CD4-positive, alpha-beta memory T cell (primary cell): ENCODE measurements at regions of chr14 and their contacts with region 1.

Region 1: GRCh38 chr14:20613094-20614037 is 22.2 kb upstream of the RNASE12 start:
- DNase-seq: peak; percentile 88 to 94 (median 93)
- H3K4me3 ChIP-seq: peak overlapping the region; percentile 39 to 66
- H3K4me3 Mint-ChIP-seq: no peak overlapping the region
- H3K27ac ChIP-seq: peak overlapping the region; percentile 13
- H3K27ac Mint-ChIP-seq: no peak overlapping the region
- H3K4me1 ChIP-seq: peaks cover 44% of the 10 kb centered on the region
- H3K4me1 Mint-ChIP-seq: peaks cover 0 to 5% (median 3%) of the 10 kb centered on the region in 4 donors
- H3K27me3 ChIP-seq: no peaks in the 10 kb centered on the region
- H3K27me3 Mint-ChIP-seq: peaks cover 1 to 4% of the 10 kb centered on the region in 2 donors

Region 2: GRCh38 chr14:20327005-20327869 is 286.1 kb before region 1 on chr14:
- CTCF ChIA-PET with region 1: interaction called, 354 read pairs
- POLR2A ChIA-PET with region 1: interaction called, 34 read pairs
- intact Hi-C with region 1: loop called (anchors 1 kb)
- DNase-seq: peak in 4 of 5 donors; percentile 65 to 68 (median 66)
- H3K4me3 ChIP-seq: no peak overlapping the region
- H3K4me3 Mint-ChIP-seq: peak overlapping the region in 3 of 8 donors; percentile 17 to 50 (median 45)
- H3K27ac ChIP-seq: peak overlapping the region; percentile 17
- H3K27ac Mint-ChIP-seq: peak overlapping the region; percentile 24 to 92 (median 77)
- H3K4me1 ChIP-seq: peaks cover 10% of the 10 kb centered on the region
- H3K4me1 Mint-ChIP-seq: peaks cover 15 to 35% (median 22%) of the 10 kb centered on the region in 4 donors
- H3K27me3 ChIP-seq: no peaks in the 10 kb centered on the region
- H3K27me3 Mint-ChIP-seq: no peaks in the 10 kb centered on the region

Region 3: DNA sequence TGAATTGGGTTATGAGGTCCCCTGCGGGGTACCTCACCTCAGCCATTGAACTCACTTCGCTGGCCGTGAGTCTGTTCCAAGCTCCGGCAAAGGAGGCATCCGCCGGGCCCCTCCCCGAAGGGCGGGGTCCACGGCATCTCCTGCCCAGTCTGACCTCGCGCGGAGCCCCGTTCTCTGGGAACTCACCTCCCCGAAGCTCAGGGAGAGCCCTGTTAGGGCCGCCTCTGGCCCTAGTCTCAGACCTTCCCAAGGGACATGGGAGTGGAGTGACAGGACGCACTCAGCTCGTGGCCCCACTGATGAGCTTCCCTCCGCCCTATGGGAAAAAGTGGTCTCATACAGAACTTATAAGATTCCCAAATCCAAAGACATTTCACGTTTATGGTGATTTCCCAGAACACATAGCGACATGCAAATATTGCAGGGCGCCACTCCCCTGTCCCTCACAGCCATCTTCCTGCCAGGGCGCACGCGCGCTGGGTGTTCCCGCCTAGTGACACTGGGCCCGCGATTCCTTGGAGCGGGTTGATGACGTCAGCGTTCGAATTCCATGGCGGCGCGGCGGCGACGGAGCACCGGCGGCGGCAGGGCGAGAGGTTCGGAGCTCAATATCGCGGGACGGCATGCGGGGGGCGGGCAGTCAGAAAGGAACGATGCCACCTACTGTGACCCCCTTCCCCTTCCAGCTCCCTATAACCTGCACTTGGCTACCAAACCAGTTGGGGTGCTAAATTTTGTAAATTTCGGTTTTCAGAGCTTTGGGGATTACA is 270.1 kb before region 1 on chr14 and contains the start of gene PARP2:
- CTCF ChIA-PET with region 1: interaction called, 33 read pairs
- POLR2A ChIA-PET with region 1: interaction called, 39 read pairs
- intact Hi-C with region 1: loop called (anchors 1 kb)
- DNase-seq: peak; percentile 93 to 96 (median 93)
- H3K4me3 ChIP-seq: peak within 1 kb of the TSS; percentile 67 to 71
- H3K4me3 Mint-ChIP-seq: peak within 1 kb of the TSS; percentile 92 to 99 (median 98)
- H3K27ac ChIP-seq: peak within 1 kb of the TSS; percentile 94
- H3K27ac Mint-ChIP-seq: peak within 1 kb of the TSS; percentile 97 to 100 (median 98)
- H3K4me1 ChIP-seq: peaks cover 7% of the 10 kb centered on the region
- H3K4me1 Mint-ChIP-seq: peaks cover 5 to 27% (median 10%) of the 10 kb centered on the region in 4 donors
- H3K27me3 ChIP-seq: no peaks in the 10 kb centered on the region
- H3K27me3 Mint-ChIP-seq: no peaks in the 10 kb centered on the region
- total RNA-seq, gene PARP2: 20.3 to 25.0 TPM

Region 4: GRCh38 chr14:20454516-20455354 is 158.6 kb before region 1 on chr14 and contains the starts of genes APEX1 and OSGEP:
- CTCF ChIA-PET with region 1: interaction called, 10 read pairs
- POLR2A ChIA-PET with region 1: interaction called, 11 read pairs
- intact Hi-C with region 1: loop called (anchors 1 kb)
- DNase-seq: peak; percentile 96 to 99 (median 98)
- H3K4me3 ChIP-seq: peak within 1 kb of the TSS; percentile 70 to 99
- H3K4me3 Mint-ChIP-seq: peak within 1 kb of the TSS in 2 of 8 donors; percentile 13 to 23
- H3K27ac ChIP-seq: peak within 1 kb of the TSS; percentile 89
- H3K27ac Mint-ChIP-seq: peak within 1 kb of the TSS in 2 of 7 donors; percentile 19 to 55
- H3K4me1 ChIP-seq: peaks cover 53% of the 10 kb centered on the region
- H3K4me1 Mint-ChIP-seq: peaks cover 5 to 21% (median 12%) of the 10 kb centered on the region in 4 donors
- H3K27me3 ChIP-seq: no peaks in the 10 kb centered on the region
- H3K27me3 Mint-ChIP-seq: no peaks in the 10 kb centered on the region
- total RNA-seq, gene APEX1: 102 to 105 TPM
- total RNA-seq, gene OSGEP: 72.3 to 75.9 TPM

Region 5: DNA sequence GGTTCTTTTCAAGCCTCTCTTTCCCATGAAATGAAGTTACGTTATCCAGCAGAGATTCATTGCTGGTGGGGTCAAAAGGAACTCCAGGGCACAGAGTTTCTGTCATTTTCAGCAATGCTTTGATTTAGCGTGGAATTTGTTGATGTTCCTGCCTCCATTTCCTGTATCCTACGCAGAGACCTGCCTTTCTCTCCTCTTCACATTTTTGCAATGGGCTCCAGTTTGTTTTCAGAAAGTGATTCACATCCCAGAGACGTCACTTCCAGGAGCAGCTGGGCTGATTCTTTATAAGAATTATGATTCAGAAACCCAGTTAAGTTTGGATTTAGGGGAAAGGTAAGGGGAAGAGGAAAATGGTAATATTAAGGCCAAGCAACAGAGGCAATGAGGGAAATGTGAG is 96.5 kb before region 1 on chr14:
- CTCF ChIA-PET with region 1: no interaction called
- POLR2A ChIA-PET with region 1: no interaction called
- intact Hi-C with region 1: no loop called
- DNase-seq: no peak
- H3K4me3 ChIP-seq: no peak overlapping the region
- H3K4me3 Mint-ChIP-seq: no peak overlapping the region
- H3K27ac ChIP-seq: no peak overlapping the region
- H3K27ac Mint-ChIP-seq: no peak overlapping the region
- H3K4me1 ChIP-seq: no peaks in the 10 kb centered on the region
- H3K4me1 Mint-ChIP-seq: peaks cover 0 to 1% (median 0%) of the 10 kb centered on the region in 4 donors
- H3K27me3 ChIP-seq: no peaks in the 10 kb centered on the region
- H3K27me3 Mint-ChIP-seq: peaks cover 0 to 1% of the 10 kb centered on the region in 2 donors

Region 6: GRCh38 chr14:20530771-20531571 is 82.4 kb before region 1 on chr14:
- CTCF ChIA-PET with region 1: interaction called, 12 read pairs
- POLR2A ChIA-PET with region 1: interaction called, 3 read pairs
- intact Hi-C with region 1: loop called (anchors 1 kb)
- DNase-seq: peak; percentile 52 to 68 (median 54)
- H3K4me3 ChIP-seq: no peak overlapping the region
- H3K4me3 Mint-ChIP-seq: peak overlapping the region in 6 of 8 donors; percentile 10 to 70 (median 60)
- H3K27ac ChIP-seq: no peak overlapping the region
- H3K27ac Mint-ChIP-seq: peak overlapping the region in 2 of 7 donors; percentile 52 to 59
- H3K4me1 ChIP-seq: no peaks in the 10 kb centered on the region
- H3K4me1 Mint-ChIP-seq: peaks cover 4 to 8% (median 7%) of the 10 kb centered on the region in 4 donors
- H3K27me3 ChIP-seq: no peaks in the 10 kb centered on the region
- H3K27me3 Mint-ChIP-seq: peaks cover 0 to 5% of the 10 kb centered on the region in 2 donors

Region 7: GRCh38 chr14:20556500-20557211 is 56.7 kb before region 1 on chr14:
- CTCF ChIA-PET with region 1: no interaction called
- POLR2A ChIA-PET with region 1: no interaction called
- intact Hi-C with region 1: no loop called
- DNase-seq: no peak
- H3K4me3 ChIP-seq: no peak overlapping the region
- H3K4me3 Mint-ChIP-seq: no peak overlapping the region
- H3K27ac ChIP-seq: no peak overlapping the region
- H3K27ac Mint-ChIP-seq: no peak overlapping the region
- H3K4me1 ChIP-seq: no peaks in the 10 kb centered on the region
- H3K4me1 Mint-ChIP-seq: no peaks in the 10 kb centered on the region
- H3K27me3 ChIP-seq: no peaks in the 10 kb centered on the region
- H3K27me3 Mint-ChIP-seq: peaks cover 5% of the 10 kb centered on the region in 2 donors

Region 8: DNA sequence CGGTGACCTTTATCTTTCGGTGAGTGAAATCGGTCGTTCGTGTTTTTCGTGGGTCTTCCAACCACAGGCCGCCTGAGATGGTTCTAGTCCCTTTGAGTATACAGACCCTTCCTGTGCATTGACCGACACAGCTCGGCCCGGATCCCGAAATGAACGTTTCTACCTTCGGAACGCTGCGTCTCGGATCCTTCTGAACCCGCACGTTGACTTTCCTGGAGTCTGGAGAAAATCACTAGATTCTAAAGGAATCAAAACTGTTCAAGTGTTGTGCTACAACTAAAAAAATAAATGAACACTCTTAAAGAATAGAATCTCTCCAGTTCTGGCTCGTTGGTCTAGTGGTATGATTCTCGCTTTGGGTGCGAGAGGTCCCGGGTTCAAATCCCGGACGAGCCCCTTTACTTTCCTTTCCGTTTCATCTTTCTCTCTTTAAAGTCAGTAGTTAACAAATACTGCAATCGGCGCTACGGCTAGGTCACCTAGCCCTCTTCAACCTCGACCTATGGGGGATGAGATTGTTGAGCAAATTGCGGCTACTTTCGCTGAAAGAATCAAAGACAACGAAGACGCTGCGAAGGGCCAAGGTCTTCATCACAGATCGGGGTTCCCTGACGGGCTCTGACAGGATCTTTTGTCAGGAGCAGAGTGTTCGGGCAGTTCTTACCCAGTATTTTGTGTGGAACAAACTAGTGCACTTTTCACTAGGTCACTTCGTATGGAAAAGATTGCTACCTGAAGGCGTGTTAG is 19.5 kb after region 1 on chr14:
- CTCF ChIA-PET with region 1: interaction called, 13 read pairs
- POLR2A ChIA-PET with region 1: interaction called, 20 read pairs
- intact Hi-C with region 1: loop called (anchors 1 kb)
- DNase-seq: peak; percentile 55 to 77 (median 71)
- H3K4me3 ChIP-seq: peak overlapping the region; percentile 34 to 51
- H3K4me3 Mint-ChIP-seq: peak overlapping the region; percentile 82 to 93 (median 90)
- H3K27ac ChIP-seq: no peak overlapping the region
- H3K27ac Mint-ChIP-seq: peak overlapping the region in 6 of 7 donors; percentile 79 to 99 (median 88)
- H3K4me1 ChIP-seq: peaks cover 37% of the 10 kb centered on the region
- H3K4me1 Mint-ChIP-seq: peaks cover 34 to 55% (median 45%) of the 10 kb centered on the region in 4 donors
- H3K27me3 ChIP-seq: peaks cover 20% of the 10 kb centered on the region
- H3K27me3 Mint-ChIP-seq: peaks cover 24 to 28% of the 10 kb centered on the region in 2 donors

Region 9: GRCh38 chr14:20782280-20782890 is 169.0 kb after region 1 on chr14:
- CTCF ChIA-PET with region 1: no interaction called
- POLR2A ChIA-PET with region 1: no interaction called
- intact Hi-C with region 1: loop called (anchors 1 kb)
- DNase-seq: peak in 4 of 5 donors; percentile 29 to 44 (median 35)
- H3K4me3 ChIP-seq: peak overlapping the region; percentile 23 to 68
- H3K4me3 Mint-ChIP-seq: peak overlapping the region; percentile 81 to 95 (median 86)
- H3K27ac ChIP-seq: peak overlapping the region; percentile 32
- H3K27ac Mint-ChIP-seq: peak overlapping the region; percentile 82 to 95 (median 86)
- H3K4me1 ChIP-seq: peaks cover 43% of the 10 kb centered on the region
- H3K4me1 Mint-ChIP-seq: peaks cover 25 to 50% (median 41%) of the 10 kb centered on the region in 4 donors
- H3K27me3 ChIP-seq: no peaks in the 10 kb centered on the region
- H3K27me3 Mint-ChIP-seq: no peaks in the 10 kb centered on the region